ENCODE measurements at regions of chr1 and their contacts with region 1.

Region 1: DNA sequence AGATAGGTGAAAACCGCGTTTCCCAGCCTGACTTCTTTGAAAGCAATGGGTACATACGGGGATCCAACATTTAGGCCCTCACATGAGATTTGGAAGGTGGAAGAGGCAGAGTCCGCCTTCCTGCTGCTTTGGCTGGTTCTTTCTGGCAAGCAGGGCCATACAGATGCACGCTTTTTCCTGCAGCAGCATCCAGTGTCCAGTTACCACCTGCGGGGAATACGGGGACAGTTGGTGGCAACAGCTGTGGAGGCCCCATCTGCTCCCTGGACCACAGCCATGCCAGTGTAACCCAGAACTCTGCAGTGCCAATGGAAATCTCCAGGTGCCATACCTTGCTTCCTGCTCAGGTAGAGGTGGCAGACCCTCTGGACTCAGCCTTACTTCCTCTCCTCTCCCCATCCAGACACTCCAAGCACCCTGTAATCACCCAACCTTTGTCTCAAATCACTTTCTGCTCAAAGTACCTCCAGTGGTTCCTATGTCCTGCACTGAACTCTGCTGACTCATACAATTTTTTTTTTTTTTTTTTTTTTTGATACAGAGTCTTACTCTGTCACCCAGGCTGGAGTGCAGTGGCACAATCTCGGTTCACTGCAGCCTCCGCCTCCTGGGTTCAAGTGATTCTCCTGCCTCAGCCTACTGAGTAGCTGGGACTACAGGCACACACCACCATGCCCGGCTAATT is 68.3 kb downstream of the SLC16A1 start:
- DNase-seq: no peak
- ATAC-seq: peak in 1 of 4 donors; percentile 15
- H3K4me3 ChIP-seq: no peak overlapping the region
- H3K27ac ChIP-seq: no peak overlapping the region
- H3K4me1 ChIP-seq: peaks cover 0 to 5% (median 3%) of the 10 kb centered on the region in 12 donors
- H3K27me3 ChIP-seq: no peaks in the 10 kb centered on the region
- CTCF ChIP-seq: no peak
- POLR2A ChIP-seq: no peak

Region 2: GRCh38 chr1:112935461-112936289 is 47.9 kb after region 1 on chr1:
- intact Hi-C with region 1: loop called in 1 of 10 experiments (anchors 5 kb)
- DNase-seq: no peak
- ATAC-seq: peak in 1 of 4 donors; percentile 7
- H3K4me3 ChIP-seq: no peak overlapping the region
- H3K27ac ChIP-seq: peak overlapping the region in 2 of 12 donors; percentile 15 to 34
- H3K4me1 ChIP-seq: peaks cover 0 to 45% (median 30%) of the 10 kb centered on the region in 12 donors
- H3K27me3 ChIP-seq: no peaks in the 10 kb centered on the region
- CTCF ChIP-seq: no peak
- POLR2A ChIP-seq: no peak

Region 3: GRCh38 chr1:113199760-113200455 is 312.2 kb after region 1 on chr1:
- intact Hi-C with region 1: no loop called
- DNase-seq: no peak
- ATAC-seq: no peak
- H3K4me3 ChIP-seq: no peak overlapping the region
- H3K27ac ChIP-seq: no peak overlapping the region
- H3K4me1 ChIP-seq: no peaks in the 10 kb centered on the region
- H3K27me3 ChIP-seq: no peaks in the 10 kb centered on the region
- CTCF ChIP-seq: no peak
- POLR2A ChIP-seq: no peak

Measured in heart left ventricle (tissue), 16 donors.